ENCODE measurements at regions of chr12 and their contacts with region 1.

Region 1: GRCh38 chr12:95820102-95820703 is 29.6 kb upstream of the NTN4 start:
- DNase-seq: peak; percentile 62
- ATAC-seq: peak; percentile 42; the same call in 1 of the 2 replicates
- H3K4me3 ChIP-seq: no peak overlapping the region
- H3K27ac ChIP-seq: no peak overlapping the region
- H3K4me1 ChIP-seq: no peaks in the 10 kb centered on the region
- H3K27me3 ChIP-seq: no peaks in the 10 kb centered on the region; the same call in 1 of the 2 replicates
- CTCF ChIP-seq: peak; percentile 61
- POLR2A ChIP-seq: no peak
- RAD21 ChIP-seq: peak; percentile 43

Region 2: GRCh38 chr12:95623585-95624042 is 196.6 kb before region 1 on chr12:
- CTCF ChIA-PET with region 1: no interaction called
- POLR2A ChIA-PET with region 1: no interaction called
- dilution Hi-C with region 1: no loop called
- in situ Hi-C with region 1: no loop called
- intact Hi-C with region 1: loop called (anchors 1 kb)
- DNase-seq: peak; percentile 89
- ATAC-seq: peak; percentile 95
- H3K4me3 ChIP-seq: no peak overlapping the region
- H3K27ac ChIP-seq: peak overlapping the region; percentile 31; the same call in 1 of the 2 replicates
- H3K4me1 ChIP-seq: peaks cover 3% of the 10 kb centered on the region
- H3K27me3 ChIP-seq: no peaks in the 10 kb centered on the region
- CTCF ChIP-seq: peak; percentile 77
- POLR2A ChIP-seq: no peak
- RAD21 ChIP-seq: peak; percentile 73

Region 3: DNA sequence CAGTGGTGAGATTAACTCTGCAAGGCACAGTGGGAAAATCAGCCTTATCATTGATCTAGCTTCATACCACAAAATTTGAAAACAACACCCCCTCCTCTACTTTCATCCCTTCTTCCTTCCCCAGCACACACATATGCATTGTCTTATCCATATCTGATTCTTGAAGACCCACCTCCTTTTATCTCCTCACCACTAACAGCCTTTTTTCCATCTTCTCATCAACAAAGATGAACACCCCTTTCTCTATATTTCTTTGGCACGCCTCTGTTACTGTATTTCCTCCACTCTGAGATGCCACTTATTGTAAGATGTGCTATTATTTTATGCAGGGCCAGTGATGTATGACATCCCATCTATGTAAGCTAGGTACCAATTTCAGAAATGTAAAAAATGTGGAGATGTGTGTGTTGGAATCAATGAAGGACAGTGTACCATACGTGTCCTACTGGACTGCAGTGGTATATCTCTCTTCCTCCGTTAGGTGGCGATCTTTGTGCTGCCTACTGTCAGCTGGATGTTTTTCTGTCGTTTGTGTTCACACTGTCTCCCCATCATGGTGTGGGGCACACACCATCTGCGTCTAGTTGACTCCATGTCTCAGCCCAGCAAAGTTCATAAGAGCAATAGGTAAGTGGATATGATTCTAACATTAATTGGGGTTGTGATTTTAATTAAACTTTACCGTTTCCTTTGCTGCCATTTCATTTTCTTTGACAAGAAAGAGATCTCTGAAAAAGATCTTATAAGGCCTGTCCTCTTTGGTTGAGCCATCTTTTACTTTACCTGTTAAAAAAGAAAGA is 98.2 kb after region 1 on chr12:
- CTCF ChIA-PET with region 1: no interaction called
- POLR2A ChIA-PET with region 1: no interaction called
- dilution Hi-C with region 1: no loop called
- in situ Hi-C with region 1: no loop called
- intact Hi-C with region 1: loop called (anchors 1 kb)
- DNase-seq: peak; percentile 42
- ATAC-seq: peak; percentile 98
- H3K4me3 ChIP-seq: no peak overlapping the region
- H3K27ac ChIP-seq: no peak overlapping the region
- H3K4me1 ChIP-seq: no peaks in the 10 kb centered on the region
- H3K27me3 ChIP-seq: peaks cover 7% of the 10 kb centered on the region
- CTCF ChIP-seq: peak; percentile 73
- POLR2A ChIP-seq: no peak
- RAD21 ChIP-seq: peak; percentile 66

Region 4: DNA sequence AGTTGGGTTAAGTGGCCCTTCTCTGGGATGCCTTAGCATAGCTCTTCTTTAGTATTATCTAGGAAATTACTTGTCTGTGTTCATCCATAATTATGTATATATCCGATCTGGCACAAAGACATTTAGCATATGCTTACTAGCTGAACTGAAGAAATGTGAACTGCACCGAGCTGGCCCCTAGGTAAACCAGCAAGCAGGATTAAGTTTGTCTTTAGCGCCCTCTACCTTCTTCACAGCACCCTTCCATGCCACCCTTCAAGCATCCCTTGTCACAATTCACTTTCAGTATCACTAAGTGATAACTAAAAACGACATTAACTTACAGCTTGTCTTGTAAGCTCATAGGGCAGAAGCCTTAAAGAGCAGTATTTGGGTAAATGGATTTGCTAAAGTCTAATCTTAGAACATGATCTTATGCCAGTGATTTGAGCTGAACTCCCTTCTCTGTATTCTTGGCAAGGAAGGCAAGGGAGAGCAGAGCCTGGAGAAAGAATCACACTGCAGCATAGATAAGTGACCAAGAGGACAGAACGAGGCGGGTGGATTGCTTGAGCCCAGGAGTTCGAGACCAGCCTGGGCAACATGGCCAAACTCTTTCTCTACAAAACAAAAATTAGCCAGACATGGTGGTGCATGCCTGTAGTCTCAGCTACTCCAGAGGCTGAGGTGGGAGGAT is 178.5 kb after region 1 on chr12:
- CTCF ChIA-PET with region 1: no interaction called
- POLR2A ChIA-PET with region 1: no interaction called
- dilution Hi-C with region 1: no loop called
- in situ Hi-C with region 1: no loop called
- intact Hi-C with region 1: loop called (anchors 2 kb)
- DNase-seq: peak; percentile 61
- ATAC-seq: peak; percentile 94
- H3K4me3 ChIP-seq: no peak overlapping the region
- H3K27ac ChIP-seq: no peak overlapping the region
- H3K4me1 ChIP-seq: no peaks in the 10 kb centered on the region
- H3K27me3 ChIP-seq: no peaks in the 10 kb centered on the region
- CTCF ChIP-seq: peak; percentile 63
- POLR2A ChIP-seq: no peak
- RAD21 ChIP-seq: peak; percentile 65

Measured in IMR-90 (cell line).